CD4-positive, alpha-beta memory T cell (primary cell): ENCODE measurements at regions of chr9 and their contacts with region 1.

Region 1: GRCh38 chr9:94603259-94604160 is 9.9 kb upstream of the FBP2 start:
- DNase-seq: peak; percentile 41 to 65 (median 53)
- H3K4me3 ChIP-seq: no peak overlapping the region
- H3K4me3 Mint-ChIP-seq: peak overlapping the region in 1 of 8 donors; percentile 12
- H3K27ac ChIP-seq: no peak overlapping the region
- H3K27ac Mint-ChIP-seq: peak overlapping the region in 1 of 7 donors; percentile 41
- H3K4me1 ChIP-seq: no peaks in the 10 kb centered on the region
- H3K4me1 Mint-ChIP-seq: peaks cover 4 to 7% (median 6%) of the 10 kb centered on the region in 4 donors
- H3K27me3 ChIP-seq: no peaks in the 10 kb centered on the region
- H3K27me3 Mint-ChIP-seq: peaks cover 0 to 1% of the 10 kb centered on the region in 2 donors

Region 2: GRCh38 chr9:94554439-94555391 is 48.8 kb before region 1 on chr9 and contains the start of gene PCAT7:
- CTCF ChIA-PET with region 1: interaction called, 3 read pairs
- POLR2A ChIA-PET with region 1: no interaction called
- intact Hi-C with region 1: loop called (anchors 1 kb)
- DNase-seq: peak in 2 of 5 donors; percentile 8 to 11
- H3K4me3 ChIP-seq: no peak within 1 kb of the TSS
- H3K4me3 Mint-ChIP-seq: no peak within 1 kb of the TSS
- H3K27ac ChIP-seq: no peak within 1 kb of the TSS
- H3K27ac Mint-ChIP-seq: no peak within 1 kb of the TSS
- H3K4me1 ChIP-seq: no peaks in the 10 kb centered on the region
- H3K4me1 Mint-ChIP-seq: no peaks in the 10 kb centered on the region
- H3K27me3 ChIP-seq: no peaks in the 10 kb centered on the region
- H3K27me3 Mint-ChIP-seq: peaks cover 15 to 17% of the 10 kb centered on the region in 2 donors
- total RNA-seq, gene PCAT7: not detected